Gastrocnemius medialis (tissue), 4 donors: ENCODE measurements at regions of chr1 and their contacts with region 1.

Region 1: GRCh38 chr1:54581621-54582035 is 33.6 kb downstream of the ACOT11 start:
- DNase-seq: peak; percentile 95 to 99
- ATAC-seq: peak; percentile 73 to 78
- H3K4me3 ChIP-seq: no peak overlapping the region
- H3K27ac ChIP-seq: peak overlapping the region; percentile 85 to 98 (median 95)
- H3K4me1 ChIP-seq: peaks cover 63 to 69% of the 10 kb centered on the region in 2 donors
- H3K27me3 ChIP-seq: no peaks in the 10 kb centered on the region
- CTCF ChIP-seq: peak in 2 of 5 experiments; percentile 10 to 15
- POLR2A ChIP-seq: peak; percentile 74 to 86

Region 2: DNA sequence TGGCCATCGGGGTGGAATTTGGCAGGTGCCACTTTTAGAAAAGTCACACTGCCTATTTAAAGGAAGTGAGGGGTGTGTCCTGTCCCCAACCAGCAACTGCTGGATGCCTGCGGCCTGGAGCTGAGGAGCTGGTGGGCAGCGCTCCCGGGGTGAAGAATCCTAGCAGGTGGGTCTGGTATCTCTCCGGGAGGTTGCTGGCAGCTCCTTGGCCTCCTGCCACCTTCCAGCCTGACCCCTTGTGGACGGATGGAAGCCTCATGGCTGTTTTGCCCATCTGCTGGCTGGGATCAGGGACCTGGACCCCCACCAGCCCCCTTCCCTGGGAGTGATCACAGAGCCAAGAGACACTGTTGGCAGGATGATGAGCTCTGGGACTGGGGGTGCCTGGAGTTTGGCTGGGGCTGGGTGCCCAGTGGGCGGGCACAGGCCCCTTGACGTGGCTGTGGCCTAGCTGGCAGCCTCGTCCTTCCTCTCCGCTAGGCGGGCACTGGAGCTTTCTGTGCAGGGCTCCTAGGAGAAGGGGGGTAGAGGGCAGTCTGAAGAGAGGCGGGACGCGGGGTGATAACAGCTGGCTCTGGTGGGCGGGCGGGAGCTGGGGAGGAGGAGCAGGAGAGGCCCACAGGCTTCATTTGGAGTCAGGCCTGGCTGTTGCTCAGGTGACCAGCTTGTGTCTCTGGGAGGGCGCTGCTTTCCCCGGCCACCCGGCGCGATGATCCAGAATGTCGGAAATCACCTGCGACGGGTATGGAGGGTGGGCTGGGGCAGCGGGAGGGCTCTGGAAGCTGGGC is 33.8 kb before region 1 on chr1 and contains the start of gene ACOT11:
- in situ Hi-C with region 1: no loop called
- intact Hi-C with region 1: loop called (anchors 1 kb)
- DNase-seq: peak; percentile 87 to 96
- ATAC-seq: peak; percentile 74 to 83
- H3K4me3 ChIP-seq: peak within 1 kb of the TSS; percentile 27 to 51 (median 30)
- H3K27ac ChIP-seq: peak within 1 kb of the TSS; percentile 84 to 98 (median 92)
- H3K4me1 ChIP-seq: peaks cover 32 to 34% of the 10 kb centered on the region in 2 donors
- H3K27me3 ChIP-seq: no peaks in the 10 kb centered on the region
- CTCF ChIP-seq: peak; percentile 54 to 81 (median 73)
- POLR2A ChIP-seq: peak; percentile 80 to 81
- total RNA-seq, gene ACOT11: 0.90 to 3.2 (median 1.2) TPM

Region 3: GRCh38 chr1:54604572-54605370 is 23.1 kb after region 1 on chr1:
- in situ Hi-C with region 1: no loop called
- intact Hi-C with region 1: no loop called
- DNase-seq: no peak
- ATAC-seq: no peak
- H3K4me3 ChIP-seq: no peak overlapping the region
- H3K27ac ChIP-seq: no peak overlapping the region
- H3K4me1 ChIP-seq: no peaks in the 10 kb centered on the region
- H3K27me3 ChIP-seq: no peaks in the 10 kb centered on the region
- CTCF ChIP-seq: no peak
- POLR2A ChIP-seq: no peak

Region 4: GRCh38 chr1:54640863-54641836 is 59.5 kb after region 1 on chr1 and contains the start of gene MROH7:
- in situ Hi-C with region 1: no loop called
- intact Hi-C with region 1: no loop called
- DNase-seq: no peak
- ATAC-seq: no peak
- H3K4me3 ChIP-seq: no peak within 1 kb of the TSS
- H3K27ac ChIP-seq: no peak within 1 kb of the TSS
- H3K4me1 ChIP-seq: peaks cover 4 to 9% of the 10 kb centered on the region in 2 donors
- H3K27me3 ChIP-seq: no peaks in the 10 kb centered on the region
- CTCF ChIP-seq: no peak
- POLR2A ChIP-seq: no peak
- total RNA-seq, gene MROH7: 0.42 to 1.3 (median 0.89) TPM

Region 5: DNA sequence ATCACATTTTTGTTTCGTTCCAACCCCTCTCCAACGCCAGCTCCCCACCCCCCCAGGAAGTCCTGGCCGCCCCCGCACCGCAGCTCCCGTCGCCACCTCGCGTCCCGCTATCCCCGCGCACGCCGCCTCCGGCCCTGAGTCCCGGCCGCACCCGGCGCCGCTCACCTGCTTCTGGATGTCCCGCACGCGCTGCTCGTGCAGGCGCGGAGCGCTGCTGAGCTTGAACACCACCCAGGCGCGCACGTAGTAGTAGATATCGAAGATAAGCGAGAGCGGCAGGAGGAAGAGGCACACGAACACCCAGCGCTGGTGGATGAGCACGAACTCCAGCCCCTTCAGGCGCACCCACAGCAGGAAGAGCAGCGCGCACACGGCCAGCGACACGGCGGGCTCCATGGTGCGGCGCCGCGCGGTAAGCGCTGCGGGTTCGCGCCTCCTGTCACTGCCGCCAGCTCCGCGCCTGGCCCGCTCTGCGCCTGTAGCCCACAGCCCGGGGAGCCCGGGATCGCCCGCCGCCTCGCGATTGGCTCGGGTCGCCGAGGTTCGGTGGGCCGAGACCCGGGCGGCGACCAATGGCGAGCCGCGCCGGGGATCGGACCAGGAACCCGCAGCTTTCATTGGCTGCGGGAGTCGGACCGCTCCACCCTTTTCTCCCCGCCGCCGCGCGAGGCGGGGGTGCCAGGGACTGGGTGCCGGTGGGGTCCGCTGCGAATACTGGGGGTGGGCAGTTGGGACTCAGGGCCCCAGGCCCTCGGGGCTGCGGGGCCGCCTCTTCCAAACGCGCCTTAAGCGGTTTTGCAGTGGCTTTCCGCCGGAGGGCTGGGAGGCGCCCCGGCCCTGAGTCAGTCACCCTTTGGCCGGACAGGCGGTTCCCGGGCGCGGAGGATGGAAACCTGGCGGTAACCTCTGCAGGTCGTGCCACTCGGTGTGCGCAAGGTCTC is 305.4 kb after region 1 on chr1 and contains the start of gene DHCR24:
- in situ Hi-C with region 1: no loop called
- intact Hi-C with region 1: loop called (anchors 10 kb)
- DNase-seq: peak; percentile 82 to 83
- ATAC-seq: peak; percentile 62 to 75
- H3K4me3 ChIP-seq: peak within 1 kb of the TSS; percentile 81 to 99 (median 86)
- H3K27ac ChIP-seq: peak within 1 kb of the TSS; percentile 84 to 93 (median 88)
- H3K4me1 ChIP-seq: peaks cover 34 to 44% of the 10 kb centered on the region in 2 donors
- H3K27me3 ChIP-seq: no peaks in the 10 kb centered on the region
- CTCF ChIP-seq: no peak
- POLR2A ChIP-seq: peak; percentile 89 to 93
- total RNA-seq, gene DHCR24: 155 to 362 (median 207) TPM

Region 6: GRCh38 chr1:54927472-54928240 is 346.0 kb after region 1 on chr1:
- in situ Hi-C with region 1: no loop called
- intact Hi-C with region 1: loop called (anchors 10 kb)
- DNase-seq: peak; percentile 66 to 69
- ATAC-seq: peak; percentile 66 to 73
- H3K4me3 ChIP-seq: no peak overlapping the region
- H3K27ac ChIP-seq: peak overlapping the region; percentile 71 to 92 (median 88)
- H3K4me1 ChIP-seq: peaks cover 56 to 67% of the 10 kb centered on the region in 2 donors
- H3K27me3 ChIP-seq: no peaks in the 10 kb centered on the region
- CTCF ChIP-seq: no peak
- POLR2A ChIP-seq: peak in 1 of 2 donors; percentile 16